PC-3 (cell line): ENCODE measurements at regions of chr19 and their contacts with region 1.

Region 1: DNA sequence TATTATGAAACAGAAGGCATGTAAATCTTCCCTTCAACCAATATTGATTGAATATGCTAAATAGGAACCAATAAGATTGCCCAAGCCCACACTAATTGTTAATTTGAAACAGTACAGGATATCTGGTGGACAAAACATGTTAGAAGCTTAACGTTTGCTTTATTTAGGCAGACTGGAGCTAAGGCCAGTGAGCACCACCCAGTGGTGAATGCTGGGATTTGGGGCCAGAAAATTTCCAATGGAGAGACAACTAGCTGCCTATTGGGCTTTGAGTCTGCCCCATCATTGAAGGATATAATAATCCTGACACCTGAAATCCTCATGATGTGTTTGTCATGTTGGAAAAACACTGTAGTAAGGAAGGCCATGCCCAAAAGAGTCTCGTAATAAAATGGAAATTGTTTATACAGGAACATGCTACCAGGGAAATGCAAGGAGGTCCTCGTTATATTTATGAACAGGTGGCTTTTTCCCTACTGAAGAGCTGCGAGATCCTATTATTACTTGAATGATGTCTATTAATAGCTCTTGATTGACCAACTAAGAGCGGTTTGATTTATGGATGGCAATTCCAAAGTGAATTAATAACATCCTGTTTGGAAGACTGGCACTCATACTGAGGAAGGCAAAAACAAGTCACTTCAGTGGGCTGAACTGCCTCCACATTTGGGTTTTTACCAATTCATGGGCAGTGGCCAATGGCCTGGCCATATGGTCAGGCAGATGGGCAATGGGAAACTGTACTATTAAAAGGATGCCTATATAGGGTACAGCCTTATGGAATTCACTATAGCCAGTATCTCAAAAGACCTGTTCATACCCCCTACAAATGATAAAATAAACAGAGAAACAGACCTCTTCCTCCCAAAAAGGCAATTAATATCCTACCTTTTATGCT is 8.7 kb downstream of the SIGLECL1 start:
- DNase-seq: peak; percentile 78
- ATAC-seq: peak; percentile 77
- H3K4me3 ChIP-seq: no peak overlapping the region
- H3K27ac ChIP-seq: no peak overlapping the region
- H3K4me1 ChIP-seq: no peaks in the 10 kb centered on the region
- H3K27me3 ChIP-seq: peaks cover 75% of the 10 kb centered on the region
- CTCF ChIP-seq: peak; percentile 93

Region 2: DNA sequence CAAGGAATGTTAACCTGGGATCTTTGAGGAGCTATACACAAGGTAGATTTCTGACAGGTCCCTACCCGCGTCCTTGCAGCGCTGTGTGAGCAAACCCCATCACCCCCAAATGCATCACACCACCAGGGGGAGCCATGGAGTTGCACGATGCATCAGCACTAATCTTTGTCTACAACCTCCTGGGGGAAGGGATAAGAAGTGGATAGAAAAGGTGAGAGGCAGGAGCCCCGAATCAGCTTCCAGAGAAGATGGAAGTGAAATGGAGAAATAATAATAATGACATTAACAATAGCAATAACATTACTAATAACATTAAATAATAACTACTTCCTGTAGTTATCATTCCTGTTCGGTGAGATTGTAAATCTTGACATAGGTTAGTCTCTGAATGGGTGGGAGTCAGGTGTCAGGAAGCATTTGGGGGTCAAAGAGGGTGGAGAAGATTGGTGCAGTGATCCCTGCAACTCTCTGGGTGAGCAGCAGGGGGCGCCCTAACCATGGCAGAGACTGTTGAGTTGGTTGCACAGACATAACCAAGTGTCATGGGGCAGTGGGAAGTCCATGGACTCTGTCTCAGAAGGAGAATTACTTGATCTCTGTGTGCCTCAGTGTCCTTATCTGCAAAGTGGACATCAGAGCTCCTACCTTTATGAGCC is 101.0 kb before region 1 on chr19:
- CTCF ChIA-PET with region 1: no interaction called
- POLR2A ChIA-PET with region 1: no interaction called
- intact Hi-C with region 1: loop called (anchors 1 kb)
- DNase-seq: peak; percentile 61
- ATAC-seq: peak; percentile 65
- H3K4me3 ChIP-seq: no peak overlapping the region
- H3K27ac ChIP-seq: no peak overlapping the region
- H3K4me1 ChIP-seq: no peaks in the 10 kb centered on the region
- H3K27me3 ChIP-seq: peaks cover 61% of the 10 kb centered on the region
- CTCF ChIP-seq: peak; percentile 94